A673 (cell line): ENCODE measurements at regions of chr7 and their contacts with region 1.

Region 1: GRCh38 chr7:77606562-77606961 is 69.5 kb downstream of the PTPN12 start:
- DNase-seq: no peak
- H3K4me3 ChIP-seq: no peak overlapping the region
- H3K27ac ChIP-seq: no peak overlapping the region
- H3K4me1 ChIP-seq: no peaks in the 10 kb centered on the region
- H3K27me3 ChIP-seq: no peaks in the 10 kb centered on the region
- CTCF ChIP-seq: no peak

Region 2: DNA sequence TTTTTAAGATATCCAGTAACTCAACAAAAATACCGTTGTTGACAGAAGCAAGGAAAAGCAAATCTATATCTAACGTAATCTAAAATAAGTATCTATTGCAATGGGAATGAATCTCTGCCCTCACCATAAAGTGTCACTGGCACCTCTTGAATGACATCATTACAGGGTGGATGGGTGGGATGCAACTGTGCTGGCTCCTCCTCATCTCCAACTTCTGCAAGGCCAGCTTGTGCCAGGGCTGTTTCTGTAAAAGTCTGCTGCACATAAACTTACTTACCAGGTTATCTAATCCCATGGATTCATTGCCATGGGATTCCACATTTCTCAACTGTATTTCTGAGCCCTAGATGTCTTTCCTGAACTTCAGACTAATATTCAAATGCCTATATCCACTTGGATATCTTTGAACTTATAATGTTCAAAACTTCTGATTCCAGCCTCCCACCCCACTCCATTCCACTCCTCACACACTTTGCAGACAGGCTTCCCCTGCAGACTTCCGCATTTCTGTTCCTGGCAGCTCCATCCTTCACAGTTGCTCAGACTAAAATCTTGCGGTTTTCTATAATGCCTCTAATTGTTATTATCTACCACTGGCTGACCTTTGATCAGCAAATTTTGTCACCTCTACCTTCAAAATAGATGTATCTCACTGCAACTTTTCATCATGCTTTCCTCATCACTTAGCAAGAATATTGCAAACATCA is 417.7 kb before region 1 on chr7:
- CTCF ChIA-PET with region 1: no interaction called
- POLR2A ChIA-PET with region 1: no interaction called
- intact Hi-C with region 1: no loop called
- DNase-seq: no peak
- H3K4me3 ChIP-seq: no peak overlapping the region
- H3K27ac ChIP-seq: no peak overlapping the region
- H3K4me1 ChIP-seq: no peaks in the 10 kb centered on the region
- H3K27me3 ChIP-seq: no peaks in the 10 kb centered on the region
- CTCF ChIP-seq: no peak

Region 3: DNA sequence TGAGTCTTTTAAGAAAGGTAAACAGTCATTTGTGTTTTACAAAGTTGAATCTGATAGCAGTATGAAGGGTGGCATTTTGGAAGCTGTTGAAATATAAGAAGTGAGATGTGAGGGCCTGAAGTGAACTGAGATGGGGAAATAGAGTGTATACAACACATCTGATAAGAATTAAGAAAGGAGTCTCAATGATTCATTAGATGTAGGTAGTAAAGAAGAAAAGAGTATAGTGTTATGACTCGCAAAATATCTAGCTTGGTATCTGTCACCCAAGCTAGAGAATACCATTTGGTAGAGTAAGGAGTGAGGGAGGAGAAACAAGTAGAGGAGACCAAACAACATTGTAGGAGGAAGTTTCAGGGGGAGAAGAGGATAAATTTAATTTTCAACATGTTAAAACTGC is 64.2 kb before region 1 on chr7:
- CTCF ChIA-PET with region 1: no interaction called
- POLR2A ChIA-PET with region 1: no interaction called
- intact Hi-C with region 1: loop called (anchors 10 kb)
- DNase-seq: no peak
- H3K4me3 ChIP-seq: no peak overlapping the region
- H3K27ac ChIP-seq: no peak overlapping the region
- H3K4me1 ChIP-seq: peaks cover 13% of the 10 kb centered on the region
- H3K27me3 ChIP-seq: no peaks in the 10 kb centered on the region
- CTCF ChIP-seq: no peak

Region 4: DNA sequence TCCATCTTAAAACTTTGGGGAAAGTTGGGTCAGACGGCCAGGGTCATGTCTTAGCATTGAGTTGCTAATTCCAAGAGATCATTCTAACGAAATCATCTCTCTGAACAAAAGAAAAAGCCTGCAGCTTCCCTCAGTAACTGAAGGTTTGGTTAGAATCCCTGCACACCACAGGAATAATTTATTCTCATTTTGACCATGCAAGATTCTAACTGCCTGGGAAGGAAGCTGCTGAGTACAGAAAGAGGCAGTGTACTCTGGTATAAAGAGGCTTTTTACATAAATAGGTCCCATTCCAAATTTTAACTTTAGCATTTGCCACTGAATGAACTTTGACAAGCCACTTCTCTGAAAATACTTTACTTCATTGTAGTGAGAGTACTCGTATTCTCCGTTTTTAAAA is 12.8 kb after region 1 on chr7:
- CTCF ChIA-PET with region 1: interaction called, 14 read pairs
- POLR2A ChIA-PET with region 1: no interaction called
- intact Hi-C with region 1: no loop called
- DNase-seq: no peak
- H3K4me3 ChIP-seq: no peak overlapping the region
- H3K27ac ChIP-seq: no peak overlapping the region
- H3K4me1 ChIP-seq: no peaks in the 10 kb centered on the region
- H3K27me3 ChIP-seq: no peaks in the 10 kb centered on the region
- CTCF ChIP-seq: no peak

Region 5: DNA sequence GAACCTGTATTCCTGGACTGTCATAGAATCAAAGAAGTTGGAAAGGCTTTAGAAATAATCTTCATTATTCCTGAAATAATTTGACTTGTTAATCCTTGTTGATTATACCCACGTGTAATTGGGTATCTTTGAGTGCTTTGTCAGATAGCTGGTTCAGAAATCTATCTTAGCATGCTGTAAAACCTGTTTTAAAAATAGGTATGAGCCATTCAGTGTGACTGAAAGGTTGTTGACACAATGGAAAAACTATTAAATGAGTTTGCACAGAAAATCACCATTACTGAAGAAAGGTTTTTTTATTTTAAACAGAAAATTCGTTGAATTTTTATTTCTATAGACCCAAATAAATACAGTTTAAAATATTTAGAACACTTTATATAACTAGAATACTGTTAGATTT is 230.7 kb after region 1 on chr7:
- CTCF ChIA-PET with region 1: no interaction called
- POLR2A ChIA-PET with region 1: no interaction called
- intact Hi-C with region 1: no loop called
- DNase-seq: no peak
- H3K4me3 ChIP-seq: no peak overlapping the region
- H3K27ac ChIP-seq: no peak overlapping the region
- H3K4me1 ChIP-seq: peaks cover 3% of the 10 kb centered on the region
- H3K27me3 ChIP-seq: no peaks in the 10 kb centered on the region
- CTCF ChIP-seq: no peak